ENCODE measurements at regions of chr17 and their contacts with region 1.

Region 1: DNA sequence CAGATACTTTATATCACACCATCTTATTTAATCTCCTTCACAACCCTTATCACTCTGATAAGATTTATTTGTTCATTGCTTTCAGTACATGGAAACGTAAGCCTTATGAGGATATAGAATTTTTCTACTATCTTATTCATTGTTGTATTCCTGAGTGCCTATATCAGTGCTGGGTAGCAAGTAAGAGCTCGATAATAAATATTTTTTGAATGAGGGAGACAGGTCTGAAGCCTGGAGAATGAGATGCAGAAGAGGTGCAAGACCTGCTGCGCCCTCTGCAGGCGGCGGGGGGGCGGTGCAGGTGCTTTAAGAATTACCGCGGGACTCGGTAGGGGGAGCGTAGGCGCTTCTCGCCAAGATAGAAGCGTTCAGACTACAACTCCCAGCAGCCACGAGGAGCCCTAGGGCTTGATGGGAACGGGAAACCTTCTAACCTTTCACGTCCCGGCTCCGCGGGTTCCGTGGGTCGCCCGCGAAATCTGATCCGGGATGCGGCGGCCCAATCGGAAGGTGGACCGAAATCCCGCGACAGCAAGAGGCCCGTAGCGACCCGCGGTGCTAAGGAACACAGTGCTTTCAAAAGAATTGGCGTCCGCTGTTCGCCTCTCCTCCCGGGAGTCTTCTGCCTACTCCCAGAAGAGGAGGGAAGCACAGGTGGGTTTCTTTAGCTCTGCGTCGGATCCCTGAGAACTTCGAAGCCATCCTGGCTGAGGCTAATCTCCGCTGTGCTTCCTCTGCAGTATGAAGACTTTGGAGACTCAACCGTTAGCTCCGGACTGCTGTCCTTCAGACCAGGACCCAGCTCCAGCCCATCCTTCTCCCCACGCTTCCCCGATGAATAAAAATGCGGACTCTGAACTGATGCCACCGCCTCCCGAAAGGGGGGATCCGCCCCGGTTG is at the start of gene WRAP53:
- DNase-seq: peak; percentile 98
- ATAC-seq: peak; percentile 81
- H3K4me3 Mint-ChIP-seq: peak within 1 kb of the TSS; percentile 92
- H3K27ac Mint-ChIP-seq: peak within 1 kb of the TSS; percentile 99
- H3K4me1 Mint-ChIP-seq: peaks cover 29% of the 10 kb centered on the region
- H3K27me3 Mint-ChIP-seq: no peaks in the 10 kb centered on the region
- CTCF ChIP-seq: peak; percentile 100
- total RNA-seq, gene WRAP53: 27.5 to 28.6 TPM

Region 2: DNA sequence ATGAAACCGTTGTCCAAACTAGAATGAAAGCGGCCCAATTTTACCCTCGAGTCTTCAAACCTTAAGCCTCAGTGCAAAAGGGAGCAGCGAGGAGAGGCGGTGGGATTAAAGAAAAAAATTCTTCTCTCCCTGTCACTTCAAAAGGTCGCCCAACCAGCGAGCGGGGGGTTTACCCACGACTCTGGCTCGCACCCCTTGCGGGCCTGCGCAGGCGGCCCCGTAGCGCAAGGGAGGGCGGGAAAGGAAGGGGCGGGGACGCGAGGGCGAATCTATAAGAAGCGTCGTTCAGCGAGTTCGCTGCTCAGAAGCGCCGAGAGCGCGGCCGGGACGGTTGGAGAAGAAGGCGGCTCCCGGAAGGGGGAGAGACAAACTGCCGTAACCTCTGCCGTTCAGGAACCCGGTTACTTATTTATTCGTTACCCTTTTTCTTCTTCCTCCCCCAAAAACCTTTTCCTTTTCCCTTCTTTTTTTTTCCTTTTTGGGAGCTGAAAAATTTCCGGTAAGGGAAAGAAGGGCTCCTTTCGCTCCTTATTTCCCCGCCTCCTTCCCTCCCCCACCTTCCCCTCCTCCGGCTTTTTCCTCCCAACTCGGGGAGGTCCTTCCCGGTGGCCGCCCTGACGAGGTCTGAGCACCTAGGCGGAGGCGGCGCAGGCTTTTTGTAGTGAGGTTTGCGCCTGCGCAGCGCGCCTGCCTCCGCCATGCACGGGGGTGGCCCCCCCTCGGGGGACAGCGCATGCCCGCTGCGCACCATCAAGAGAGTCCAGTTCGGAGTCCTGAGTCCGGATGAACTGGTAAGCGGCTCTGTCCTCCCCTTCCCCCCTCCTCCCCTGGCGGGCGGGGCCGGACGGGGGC is 203.9 kb before region 1 on chr17 and contains the start of gene POLR2A:
- CTCF ChIA-PET with region 1: no interaction called
- POLR2A ChIA-PET with region 1: interaction called, 17 read pairs
- intact Hi-C with region 1: no loop called
- DNase-seq: peak; percentile 96
- ATAC-seq: peak; percentile 67
- H3K4me3 Mint-ChIP-seq: peak within 1 kb of the TSS; percentile 96
- H3K27ac Mint-ChIP-seq: peak within 1 kb of the TSS; percentile 99
- H3K4me1 Mint-ChIP-seq: peaks cover 63% of the 10 kb centered on the region
- H3K27me3 Mint-ChIP-seq: no peaks in the 10 kb centered on the region
- CTCF ChIP-seq: no peak
- total RNA-seq, gene POLR2A: 219 to 223 TPM

Region 3: GRCh38 chr17:7583253-7584109 is 104.7 kb before region 1 on chr17 and contains the start of gene MPDU1:
- CTCF ChIA-PET with region 1: interaction called, 43 read pairs
- POLR2A ChIA-PET with region 1: interaction called, 41 read pairs
- intact Hi-C with region 1: loop called (anchors 5 kb)
- DNase-seq: peak; percentile 97
- ATAC-seq: peak; percentile 77
- H3K4me3 Mint-ChIP-seq: peak within 1 kb of the TSS; percentile 94
- H3K27ac Mint-ChIP-seq: peak within 1 kb of the TSS; percentile 99
- H3K4me1 Mint-ChIP-seq: peaks cover 55% of the 10 kb centered on the region
- H3K27me3 Mint-ChIP-seq: no peaks in the 10 kb centered on the region
- CTCF ChIP-seq: no peak
- total RNA-seq, gene MPDU1: 50.9 to 51.4 TPM

Region 4: DNA sequence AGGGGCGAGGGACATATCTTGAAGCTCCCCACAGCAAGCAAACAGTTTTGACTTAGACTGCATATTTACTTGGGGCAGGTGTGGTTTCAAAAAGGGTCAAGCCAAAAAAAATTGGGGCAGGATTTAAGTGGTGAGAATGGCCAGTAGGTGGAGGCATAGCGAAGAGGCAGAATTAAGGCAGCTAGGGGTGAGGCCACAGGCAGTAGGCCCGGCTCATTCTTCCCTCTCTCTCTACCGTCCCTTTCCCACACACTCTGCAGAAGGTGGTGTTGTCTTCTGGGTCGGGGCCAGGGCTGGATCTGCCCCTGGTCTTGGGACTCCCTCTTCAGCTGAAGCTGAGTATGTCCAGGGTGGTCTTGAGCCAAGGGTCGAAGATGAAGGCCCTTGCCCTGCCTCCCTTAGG is 55.7 kb before region 1 on chr17:
- CTCF ChIA-PET with region 1: interaction called, 63 read pairs
- POLR2A ChIA-PET with region 1: interaction called, 41 read pairs
- intact Hi-C with region 1: loop called (anchors 5 kb)
- DNase-seq: peak; percentile 60
- ATAC-seq: peak; percentile 48
- H3K4me3 Mint-ChIP-seq: no peak overlapping the region
- H3K27ac Mint-ChIP-seq: no peak overlapping the region
- H3K4me1 Mint-ChIP-seq: peaks cover 3% of the 10 kb centered on the region
- H3K27me3 Mint-ChIP-seq: no peaks in the 10 kb centered on the region
- CTCF ChIP-seq: peak; percentile 56

Region 5: GRCh38 chr17:7673239-7673638 is 14.9 kb before region 1 on chr17:
- CTCF ChIA-PET with region 1: interaction called, 37 read pairs
- POLR2A ChIA-PET with region 1: interaction called, 78 read pairs
- intact Hi-C with region 1: no loop called
- DNase-seq: peak; percentile 79
- ATAC-seq: no peak
- H3K4me3 Mint-ChIP-seq: no peak overlapping the region
- H3K27ac Mint-ChIP-seq: no peak overlapping the region
- H3K4me1 Mint-ChIP-seq: no peaks in the 10 kb centered on the region
- H3K27me3 Mint-ChIP-seq: no peaks in the 10 kb centered on the region
- CTCF ChIP-seq: peak; percentile 65

Region 6: GRCh38 chr17:7834962-7835813 is 147.0 kb after region 1 on chr17:
- CTCF ChIA-PET with region 1: interaction called, 6 read pairs
- POLR2A ChIA-PET with region 1: interaction called, 21 read pairs
- intact Hi-C with region 1: no loop called
- DNase-seq: peak; percentile 94
- ATAC-seq: peak; percentile 50
- H3K4me3 Mint-ChIP-seq: peak overlapping the region; percentile 83
- H3K27ac Mint-ChIP-seq: peak overlapping the region; percentile 91
- H3K4me1 Mint-ChIP-seq: peaks cover 41% of the 10 kb centered on the region
- H3K27me3 Mint-ChIP-seq: no peaks in the 10 kb centered on the region
- CTCF ChIP-seq: peak; percentile 84

Measured in activated CD8-positive, alpha-beta T cell treated with anti-CD3 and anti-CD28 coated beads for 36 hours (primary cell).